Upper lobe of right lung (tissue), 1 donor: ENCODE measurements at regions of chr1 and their contacts with region 1.

Region 1: DNA sequence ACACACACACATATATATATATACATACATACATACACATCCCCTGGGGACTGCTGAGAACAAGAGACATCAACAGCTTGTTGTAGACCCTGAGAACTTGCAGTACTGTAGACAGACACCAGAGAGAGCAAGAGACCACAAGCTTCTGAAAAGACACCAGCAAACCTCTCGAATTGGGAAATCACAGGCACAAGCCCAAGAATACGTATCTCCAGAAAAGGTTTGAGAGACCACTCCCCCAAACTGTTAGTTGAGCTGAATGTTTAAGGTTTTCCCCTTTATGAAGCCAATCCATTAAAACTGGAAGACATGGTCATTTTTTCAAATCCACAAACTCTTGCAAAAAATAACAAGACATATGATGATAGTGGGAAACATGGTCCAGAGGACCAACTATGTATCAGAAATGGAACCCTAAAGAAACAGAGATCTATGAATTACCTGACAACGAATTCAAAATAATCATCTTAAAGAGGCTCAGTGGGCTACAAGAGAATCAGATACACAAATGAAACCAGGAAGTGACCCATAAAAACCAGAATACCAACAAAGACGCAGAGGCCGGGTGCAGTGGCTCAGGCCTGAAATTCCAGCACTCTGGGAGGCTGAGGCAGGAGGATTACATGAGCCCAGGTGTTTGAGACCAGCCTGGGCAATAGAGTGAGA is 45.1 kb downstream of the SLC2A1 start:
- DNase-seq: no peak
- ATAC-seq: peak; percentile 95
- H3K4me3 ChIP-seq: no peak overlapping the region
- H3K27ac ChIP-seq: no peak overlapping the region
- H3K4me1 ChIP-seq: no peaks in the 10 kb centered on the region
- H3K27me3 ChIP-seq: no peaks in the 10 kb centered on the region
- CTCF ChIP-seq: peak; percentile 90

Region 2: DNA sequence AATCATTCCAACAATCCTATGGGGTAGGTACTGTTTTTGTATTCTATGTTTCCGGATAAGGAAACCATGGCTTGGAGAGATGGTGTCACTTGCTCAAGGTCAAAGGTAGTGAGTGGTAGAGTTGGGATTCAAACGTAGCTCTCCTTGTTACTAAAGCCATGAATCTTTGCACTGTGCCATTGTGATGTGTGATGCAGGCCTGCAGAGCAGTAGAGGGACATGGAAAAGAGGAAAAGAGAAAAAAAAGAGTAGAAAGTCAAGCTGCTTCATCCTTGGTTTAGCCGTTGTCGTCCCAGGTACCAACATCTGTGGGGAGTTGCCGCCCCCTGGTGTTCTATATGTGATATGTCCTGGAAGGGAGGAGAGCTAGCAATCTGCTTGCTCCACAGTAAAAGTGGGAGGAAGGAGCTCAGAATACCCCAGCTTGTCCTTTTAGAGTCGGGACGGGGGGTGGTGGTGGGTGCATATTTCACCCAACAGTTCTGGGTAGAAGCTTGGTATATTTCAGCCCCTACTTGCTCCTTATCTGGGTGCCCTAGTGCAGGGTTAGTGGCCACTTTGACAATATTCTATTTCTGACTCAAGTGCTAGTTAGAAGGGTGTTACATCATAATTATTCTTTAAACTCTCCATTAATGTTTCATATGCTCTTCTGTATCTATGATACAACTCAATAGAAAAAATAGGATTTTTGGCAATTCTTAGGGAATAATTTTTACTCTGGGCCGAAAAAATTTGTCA is 160.1 kb after region 1 on chr1:
- intact Hi-C with region 1: loop called (anchors 5 kb)
- DNase-seq: no peak
- ATAC-seq: peak; percentile 96
- H3K4me3 ChIP-seq: no peak overlapping the region
- H3K27ac ChIP-seq: no peak overlapping the region
- H3K4me1 ChIP-seq: peaks cover 3% of the 10 kb centered on the region
- H3K27me3 ChIP-seq: peaks cover 4% of the 10 kb centered on the region
- CTCF ChIP-seq: peak; percentile 86